T-cell (primary cell): ENCODE measurements at regions of chr9 and their contacts with region 1.

Region 1: DNA sequence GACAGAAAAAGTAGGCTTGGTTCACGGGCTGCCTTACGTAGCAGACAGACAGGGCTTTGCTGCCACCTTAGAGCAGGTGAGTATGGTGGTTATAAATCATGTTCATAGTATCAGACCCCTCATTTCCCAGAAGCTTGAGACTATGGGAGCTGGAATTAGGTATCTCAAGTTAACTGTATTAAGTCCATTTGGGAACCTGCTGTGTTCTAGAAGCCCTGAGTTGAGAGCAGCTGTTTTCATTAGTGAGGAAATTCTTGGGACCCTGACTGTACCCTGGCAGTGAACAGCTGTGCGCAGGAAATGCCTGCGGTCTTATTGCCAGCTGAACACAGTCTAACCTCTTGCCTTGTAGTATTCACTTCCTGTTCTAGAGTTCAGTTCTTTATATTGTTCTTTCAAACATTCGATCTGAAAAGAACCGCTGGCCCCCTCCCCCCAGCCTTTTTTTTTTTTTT is 29.8 kb downstream of the UGCG start:
- DNase-seq: peak; percentile 31 to 79 (median 62)
- ATAC-seq: peak; percentile 96 to 100 (median 98)
- H3K4me3 ChIP-seq: no peak overlapping the region
- H3K4me3 Mint-ChIP-seq: peak overlapping the region; percentile 14 to 70 (median 56)
- H3K27ac ChIP-seq: peak overlapping the region; percentile 47
- H3K27ac Mint-ChIP-seq: peak overlapping the region; percentile 86 to 88
- H3K4me1 ChIP-seq: peaks cover 25 to 29% of the 10 kb centered on the region in 2 experiments
- H3K4me1 Mint-ChIP-seq: peaks cover 42 to 58% (median 47%) of the 10 kb centered on the region in 3 donors
- H3K27me3 ChIP-seq: no peaks in the 10 kb centered on the region
- H3K27me3 Mint-ChIP-seq: no peaks in the 10 kb centered on the region

Region 2: DNA sequence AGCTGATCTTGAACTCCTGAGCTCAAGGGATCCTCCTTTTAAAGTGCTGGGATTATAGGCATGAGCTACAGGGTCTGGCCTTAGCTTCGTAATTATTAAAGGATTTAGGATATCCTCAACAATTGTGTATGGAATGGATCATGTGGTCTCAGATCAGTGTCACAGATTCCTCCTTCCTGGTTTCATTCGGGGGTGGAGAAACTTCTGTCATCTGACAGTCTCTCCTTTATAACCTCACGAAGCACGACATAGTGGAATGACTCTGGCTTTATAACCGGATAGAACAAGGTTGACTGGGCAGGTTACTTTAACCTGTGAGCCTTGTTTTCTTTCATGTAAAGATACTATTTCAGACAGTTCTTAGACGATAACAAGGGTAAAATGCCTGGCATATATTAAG is 269.4 kb before region 1 on chr9:
- CTCF ChIA-PET with region 1: no interaction called
- POLR2A ChIA-PET with region 1: interaction called in 1 of 2 experiments, 12 read pairs
- DNase-seq: no peak
- ATAC-seq: no peak
- H3K4me3 ChIP-seq: no peak overlapping the region
- H3K4me3 Mint-ChIP-seq: no peak overlapping the region
- H3K27ac ChIP-seq: no peak overlapping the region
- H3K27ac Mint-ChIP-seq: no peak overlapping the region
- H3K4me1 ChIP-seq: peaks cover 0 to 9% of the 10 kb centered on the region in 2 experiments
- H3K4me1 Mint-ChIP-seq: peaks cover 5 to 16% (median 11%) of the 10 kb centered on the region in 3 donors
- H3K27me3 ChIP-seq: no peaks in the 10 kb centered on the region
- H3K27me3 Mint-ChIP-seq: no peaks in the 10 kb centered on the region

Region 3: GRCh38 chr9:111700776-111701175 is 225.7 kb before region 1 on chr9:
- CTCF ChIA-PET with region 1: no interaction called
- POLR2A ChIA-PET with region 1: no interaction called
- DNase-seq: no peak
- ATAC-seq: no peak
- H3K4me3 ChIP-seq: no peak overlapping the region
- H3K4me3 Mint-ChIP-seq: no peak overlapping the region
- H3K27ac ChIP-seq: no peak overlapping the region
- H3K27ac Mint-ChIP-seq: no peak overlapping the region
- H3K4me1 ChIP-seq: no peaks in the 10 kb centered on the region
- H3K4me1 Mint-ChIP-seq: peaks cover 7 to 16% (median 8%) of the 10 kb centered on the region in 3 donors
- H3K27me3 ChIP-seq: no peaks in the 10 kb centered on the region
- H3K27me3 Mint-ChIP-seq: no peaks in the 10 kb centered on the region

Region 4: DNA sequence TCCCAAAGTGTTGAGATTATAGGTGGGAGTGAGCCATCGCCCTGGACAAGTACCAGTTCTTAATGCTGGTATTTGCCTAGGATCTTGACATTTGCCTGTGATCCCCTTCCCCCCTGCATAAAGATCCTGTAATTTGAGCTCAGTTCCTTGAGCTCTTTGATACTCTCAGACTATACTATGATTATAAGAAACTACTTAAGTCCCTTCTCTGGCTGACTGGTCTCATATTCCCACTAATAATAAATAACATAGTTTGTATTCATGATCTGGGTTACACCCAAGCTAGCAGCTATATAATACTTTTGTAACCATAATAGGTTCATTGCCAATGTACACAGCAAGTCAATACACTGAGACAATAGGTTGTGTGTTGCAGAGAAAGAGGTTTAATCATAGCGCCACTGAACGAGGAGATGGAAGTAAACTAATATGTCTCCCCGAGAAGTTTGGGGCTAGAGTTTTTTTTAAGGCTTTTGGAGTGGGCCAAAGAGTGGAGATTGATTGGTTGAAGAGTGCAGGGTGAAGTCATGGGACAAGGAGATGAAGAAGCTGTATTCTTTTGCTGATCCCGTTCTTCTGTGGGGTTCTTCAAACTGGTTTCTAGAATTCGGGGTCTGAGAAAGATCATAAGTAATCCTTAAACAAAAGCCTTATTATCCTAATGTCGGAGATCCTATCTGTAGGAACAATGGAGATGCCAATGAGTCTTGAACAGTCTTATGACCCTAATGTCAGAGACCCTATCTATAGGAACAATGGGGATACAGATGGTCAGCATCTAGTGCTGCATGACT is 111.0 kb before region 1 on chr9:
- CTCF ChIA-PET with region 1: no interaction called
- POLR2A ChIA-PET with region 1: no interaction called
- DNase-seq: no peak
- ATAC-seq: no peak
- H3K4me3 ChIP-seq: no peak overlapping the region
- H3K4me3 Mint-ChIP-seq: no peak overlapping the region
- H3K27ac ChIP-seq: no peak overlapping the region
- H3K27ac Mint-ChIP-seq: no peak overlapping the region
- H3K4me1 ChIP-seq: no peaks in the 10 kb centered on the region
- H3K4me1 Mint-ChIP-seq: no peaks in the 10 kb centered on the region
- H3K27me3 ChIP-seq: no peaks in the 10 kb centered on the region
- H3K27me3 Mint-ChIP-seq: no peaks in the 10 kb centered on the region

Region 5: GRCh38 chr9:111903996-111904395 is 22.5 kb before region 1 on chr9:
- CTCF ChIA-PET with region 1: no interaction called
- POLR2A ChIA-PET with region 1: no interaction called
- DNase-seq: no peak
- ATAC-seq: no peak
- H3K4me3 ChIP-seq: no peak overlapping the region
- H3K4me3 Mint-ChIP-seq: peak overlapping the region in 1 of 3 donors; percentile 3
- H3K27ac ChIP-seq: no peak overlapping the region
- H3K27ac Mint-ChIP-seq: peak overlapping the region; percentile 34 to 67
- H3K4me1 ChIP-seq: peaks cover 31 to 45% of the 10 kb centered on the region in 2 experiments
- H3K4me1 Mint-ChIP-seq: peaks cover 52 to 54% (median 53%) of the 10 kb centered on the region in 3 donors
- H3K27me3 ChIP-seq: no peaks in the 10 kb centered on the region
- H3K27me3 Mint-ChIP-seq: no peaks in the 10 kb centered on the region

Region 6: GRCh38 chr9:112002131-112002846 is 75.8 kb after region 1 on chr9:
- CTCF ChIA-PET with region 1: no interaction called
- POLR2A ChIA-PET with region 1: interaction called in 1 of 2 experiments, 12 read pairs
- DNase-seq: peak in 31 of 35 experiments; percentile 2 to 59 (median 24)
- ATAC-seq: peak; percentile 94 to 98 (median 97)
- H3K4me3 ChIP-seq: no peak overlapping the region
- H3K4me3 Mint-ChIP-seq: peak overlapping the region in 2 of 3 donors; percentile 35 to 56
- H3K27ac ChIP-seq: peak overlapping the region; percentile 43
- H3K27ac Mint-ChIP-seq: peak overlapping the region; percentile 86 to 92
- H3K4me1 ChIP-seq: peaks cover 13 to 34% of the 10 kb centered on the region in 2 experiments
- H3K4me1 Mint-ChIP-seq: peaks cover 32 to 42% (median 35%) of the 10 kb centered on the region in 3 donors
- H3K27me3 ChIP-seq: no peaks in the 10 kb centered on the region
- H3K27me3 Mint-ChIP-seq: no peaks in the 10 kb centered on the region

Region 7: DNA sequence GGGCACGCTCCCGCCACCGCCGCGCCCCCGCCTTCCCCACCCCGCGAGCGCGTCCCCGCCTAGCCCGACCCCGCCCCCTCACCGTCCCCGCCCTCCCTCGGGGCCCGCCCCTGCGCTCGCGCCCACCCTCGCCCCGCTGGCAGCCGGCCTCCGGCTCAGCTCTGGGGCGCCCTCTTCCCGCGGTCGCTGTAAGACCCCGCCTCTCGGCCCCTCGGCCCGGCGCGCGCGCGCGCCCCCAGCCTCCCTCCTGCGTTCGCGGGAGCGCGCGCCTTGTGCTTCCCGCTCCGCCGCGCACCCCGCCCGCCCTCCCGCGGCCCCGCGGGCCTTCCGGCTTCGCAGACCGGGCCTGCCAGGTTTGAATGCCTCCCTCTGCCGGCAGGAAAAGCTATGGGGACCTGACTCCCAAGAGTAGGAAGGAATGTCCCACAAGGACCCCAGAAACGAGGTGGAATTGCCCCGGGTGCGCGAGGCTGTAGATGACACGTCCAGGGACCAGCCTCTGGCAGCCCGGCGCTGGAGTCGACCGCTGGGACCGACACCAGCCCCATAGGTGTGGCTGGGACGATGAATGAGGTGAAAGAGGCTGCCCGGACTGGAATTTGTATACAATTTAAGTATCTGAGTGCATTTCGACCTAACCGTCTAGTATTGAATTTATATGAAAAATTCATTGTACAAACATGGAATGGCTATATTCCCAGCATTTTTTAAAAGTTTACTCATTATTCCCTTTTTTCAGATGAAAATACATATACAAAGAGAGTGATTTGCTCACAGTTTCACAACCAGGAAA is 407.4 kb after region 1 on chr9:
- CTCF ChIA-PET with region 1: no interaction called
- POLR2A ChIA-PET with region 1: interaction called in 1 of 2 experiments, 18 read pairs
- DNase-seq: peak in 34 of 35 experiments; percentile 80 to 96 (median 88)
- ATAC-seq: peak; percentile 84 to 90 (median 86)
- H3K4me3 ChIP-seq: peak overlapping the region; percentile 82 to 85
- H3K4me3 Mint-ChIP-seq: peak overlapping the region; percentile 76 to 95 (median 90)
- H3K27ac ChIP-seq: peak overlapping the region; percentile 91
- H3K27ac Mint-ChIP-seq: peak overlapping the region; percentile 85 to 96
- H3K4me1 ChIP-seq: peaks cover 13 to 29% of the 10 kb centered on the region in 2 experiments
- H3K4me1 Mint-ChIP-seq: peaks cover 30 to 43% (median 38%) of the 10 kb centered on the region in 3 donors
- H3K27me3 ChIP-seq: no peaks in the 10 kb centered on the region
- H3K27me3 Mint-ChIP-seq: no peaks in the 10 kb centered on the region